WTC11 (cell line): ENCODE measurements at regions of chr3 and their contacts with region 1.

Region 1: GRCh38 chr3:66938338-66938963 is 59.7 kb upstream of the KBTBD8 start:
- DNase-seq: peak; percentile 39
- ATAC-seq: peak; percentile 95
- H3K4me3 Mint-ChIP-seq: no peak overlapping the region
- H3K27ac Mint-ChIP-seq: no peak overlapping the region
- H3K4me1 Mint-ChIP-seq: peaks cover 48% of the 10 kb centered on the region
- H3K27me3 Mint-ChIP-seq: no peaks in the 10 kb centered on the region
- CTCF ChIP-seq: peak; percentile 64

Region 2: DNA sequence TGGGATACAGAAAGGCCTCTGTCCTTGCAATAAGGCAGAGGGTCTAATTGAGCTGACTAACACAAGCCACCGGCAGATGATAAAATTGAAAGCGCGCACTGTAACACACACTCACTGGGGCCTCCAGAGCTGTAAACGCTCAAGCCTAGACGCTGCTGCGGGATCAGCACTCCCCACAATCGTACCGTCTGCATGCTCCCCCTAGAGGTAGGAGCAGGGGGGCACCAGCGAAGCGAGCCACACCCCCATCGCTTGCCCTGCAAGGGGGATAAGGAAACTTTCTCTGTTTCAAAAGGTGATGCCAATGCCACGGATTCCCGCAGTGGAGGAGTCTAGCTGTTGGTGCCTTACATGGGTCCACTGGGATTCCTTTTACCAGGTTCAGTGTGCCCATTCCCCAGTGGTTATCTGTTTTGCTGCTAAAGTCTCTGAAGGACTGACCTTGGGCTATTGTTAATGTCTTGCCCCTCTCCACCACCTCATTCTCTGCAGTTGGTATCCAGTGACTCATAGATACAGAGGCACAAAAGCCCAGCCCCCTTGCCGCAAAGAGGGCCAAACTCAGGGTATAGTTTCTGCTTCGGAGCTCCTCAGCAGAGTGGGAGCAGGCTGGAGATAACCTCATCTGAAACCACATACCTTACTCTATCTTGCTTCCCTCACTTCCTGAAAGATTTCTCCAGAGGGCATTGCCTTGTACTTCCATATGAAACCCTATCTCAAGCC is 79.6 kb before region 1 on chr3:
- CTCF ChIA-PET with region 1: interaction called, 12 read pairs
- POLR2A ChIA-PET with region 1: no interaction called
- DNase-seq: peak; percentile 83
- ATAC-seq: peak; percentile 99
- H3K4me3 Mint-ChIP-seq: no peak overlapping the region; the same call in 1 of the 2 replicates
- H3K27ac Mint-ChIP-seq: no peak overlapping the region
- H3K4me1 Mint-ChIP-seq: peaks cover 30% of the 10 kb centered on the region
- H3K27me3 Mint-ChIP-seq: no peaks in the 10 kb centered on the region; the same call in 1 of the 2 replicates
- CTCF ChIP-seq: peak; percentile 49

Region 3: DNA sequence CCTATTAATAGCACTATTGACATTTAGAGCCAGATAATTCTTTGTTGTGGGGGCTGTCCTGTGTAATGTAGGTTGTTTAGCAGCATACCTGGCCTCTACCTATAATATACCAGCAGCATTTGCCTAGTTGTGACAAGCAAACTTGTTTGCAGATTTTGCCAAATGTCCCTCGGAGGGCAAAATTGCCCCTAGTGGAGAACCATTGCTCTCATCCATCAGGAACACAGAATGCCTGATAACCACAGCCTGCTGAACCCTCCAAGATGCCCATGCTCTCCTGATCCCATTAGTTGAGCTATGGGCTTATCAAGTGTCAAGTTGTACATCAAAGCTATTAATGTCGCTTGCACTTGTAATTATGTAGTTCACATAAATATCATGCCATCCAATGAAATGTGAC is 44.6 kb after region 1 on chr3:
- CTCF ChIA-PET with region 1: interaction called, 31 read pairs
- POLR2A ChIA-PET with region 1: no interaction called
- DNase-seq: no peak
- ATAC-seq: peak; percentile 65
- H3K4me3 Mint-ChIP-seq: no peak overlapping the region
- H3K27ac Mint-ChIP-seq: no peak overlapping the region
- H3K4me1 Mint-ChIP-seq: peaks cover 34% of the 10 kb centered on the region
- H3K27me3 Mint-ChIP-seq: no peaks in the 10 kb centered on the region
- CTCF ChIP-seq: no peak

Region 4: GRCh38 chr3:66998113-66998903 is 59.9 kb after region 1 on chr3 and contains the start of gene KBTBD8:
- CTCF ChIA-PET with region 1: interaction called, 14 read pairs
- POLR2A ChIA-PET with region 1: no interaction called
- DNase-seq: peak; percentile 98
- ATAC-seq: peak; percentile 97
- H3K4me3 Mint-ChIP-seq: peak within 1 kb of the TSS; percentile 93
- H3K27ac Mint-ChIP-seq: no peak within 1 kb of the TSS
- H3K4me1 Mint-ChIP-seq: peaks cover 18% of the 10 kb centered on the region
- H3K27me3 Mint-ChIP-seq: 0 out of 2 replicates have a peak, but pooled peaks cover 5% of the 10 kb centered on the region
- CTCF ChIP-seq: no peak
- total RNA-seq, gene KBTBD8: 14.5 to 15.7 TPM (median 15.0 TPM) in 3 replicates

Region 5: GRCh38 chr3:67384760-67385397 is 446.4 kb after region 1 on chr3:
- CTCF ChIA-PET with region 1: interaction called, 16 read pairs
- POLR2A ChIA-PET with region 1: no interaction called
- DNase-seq: peak; percentile 78
- ATAC-seq: peak; percentile 89
- H3K4me3 Mint-ChIP-seq: no peak overlapping the region; the same call in 1 of the 2 replicates
- H3K27ac Mint-ChIP-seq: no peak overlapping the region
- H3K4me1 Mint-ChIP-seq: peaks cover 17% of the 10 kb centered on the region
- H3K27me3 Mint-ChIP-seq: no peaks in the 10 kb centered on the region
- CTCF ChIP-seq: peak; percentile 72